MCF 10A (cell line): ENCODE measurements at regions of chr2 and their contacts with region 1.

Region 1: DNA sequence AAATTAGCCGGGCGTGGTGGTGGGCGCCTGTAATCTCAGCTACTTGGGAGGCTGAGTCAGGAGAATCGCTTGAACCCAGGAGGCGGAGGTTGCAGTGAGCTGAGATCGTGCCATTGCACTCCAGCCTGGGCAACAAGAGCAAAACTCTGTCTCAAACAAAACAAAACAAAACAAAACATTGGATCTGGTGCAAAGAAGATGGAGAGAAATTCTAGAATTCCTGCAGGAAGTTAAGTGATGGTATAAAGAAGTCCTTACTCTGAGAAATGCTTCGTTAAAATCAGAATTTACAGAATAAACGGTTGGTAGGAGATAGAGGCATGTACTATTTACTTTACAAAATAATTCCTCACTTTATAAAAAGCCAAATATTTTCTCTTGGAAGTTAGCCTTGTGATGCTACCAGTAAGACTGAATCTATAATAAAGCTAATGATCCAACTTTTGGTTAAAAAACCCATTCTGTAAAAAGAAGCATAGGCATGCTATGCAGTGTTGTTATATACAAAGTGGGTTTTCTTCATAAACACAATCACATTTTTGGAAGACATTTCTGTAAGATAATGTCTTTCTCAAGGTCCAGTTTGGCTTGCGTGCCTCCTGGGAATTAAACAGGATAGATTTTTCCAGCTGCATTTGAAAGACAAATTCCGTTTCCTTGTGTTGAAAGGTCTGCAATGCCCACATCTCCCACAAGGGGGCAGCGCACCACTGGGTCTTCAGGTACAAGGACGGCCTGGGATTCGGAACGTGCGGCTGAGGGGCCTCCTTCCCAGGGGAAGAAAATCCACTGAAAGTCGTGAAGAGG is 35.6 kb upstream of the PNO1 start:
- DNase-seq: peak; percentile 84
- H3K4me3 Mint-ChIP-seq: no peak overlapping the region
- H3K27ac Mint-ChIP-seq: no peak overlapping the region
- H3K4me1 Mint-ChIP-seq: peaks cover 5% of the 10 kb centered on the region
- H3K27me3 Mint-ChIP-seq: no peaks in the 10 kb centered on the region
- CTCF ChIP-seq: peak; percentile 97

Region 2: GRCh38 chr2:66541646-66542045 is 1580.4 kb before region 1 on chr2:
- CTCF ChIA-PET with region 1: no interaction called
- POLR2A ChIA-PET with region 1: no interaction called
- intact Hi-C with region 1: no loop called
- DNase-seq: no peak
- H3K4me3 Mint-ChIP-seq: no peak overlapping the region
- H3K27ac Mint-ChIP-seq: no peak overlapping the region
- H3K4me1 Mint-ChIP-seq: no peaks in the 10 kb centered on the region
- H3K27me3 Mint-ChIP-seq: no peaks in the 10 kb centered on the region
- CTCF ChIP-seq: no peak

Region 3: GRCh38 chr2:68018727-68019126 is 103.3 kb before region 1 on chr2:
- CTCF ChIA-PET with region 1: no interaction called
- POLR2A ChIA-PET with region 1: no interaction called
- intact Hi-C with region 1: no loop called
- DNase-seq: no peak
- H3K4me3 Mint-ChIP-seq: no peak overlapping the region
- H3K27ac Mint-ChIP-seq: no peak overlapping the region
- H3K4me1 Mint-ChIP-seq: peaks cover 5% of the 10 kb centered on the region
- H3K27me3 Mint-ChIP-seq: no peaks in the 10 kb centered on the region
- CTCF ChIP-seq: no peak

Region 4: GRCh38 chr2:68110102-68110501 is 12.0 kb before region 1 on chr2:
- CTCF ChIA-PET with region 1: interaction called, 14 read pairs
- POLR2A ChIA-PET with region 1: no interaction called
- intact Hi-C with region 1: no loop called
- DNase-seq: no peak
- H3K4me3 Mint-ChIP-seq: no peak overlapping the region
- H3K27ac Mint-ChIP-seq: no peak overlapping the region
- H3K4me1 Mint-ChIP-seq: no peaks in the 10 kb centered on the region
- H3K27me3 Mint-ChIP-seq: no peaks in the 10 kb centered on the region
- CTCF ChIP-seq: no peak

Region 5: GRCh38 chr2:68225119-68225632 is 103.1 kb after region 1 on chr2:
- CTCF ChIA-PET with region 1: interaction called, 4 read pairs
- POLR2A ChIA-PET with region 1: no interaction called
- intact Hi-C with region 1: loop called (anchors 1 kb)
- DNase-seq: peak; percentile 78
- H3K4me3 Mint-ChIP-seq: peak overlapping the region; percentile 56
- H3K27ac Mint-ChIP-seq: peak overlapping the region; percentile 74
- H3K4me1 Mint-ChIP-seq: peaks cover 28% of the 10 kb centered on the region
- H3K27me3 Mint-ChIP-seq: no peaks in the 10 kb centered on the region
- CTCF ChIP-seq: peak; percentile 34

Region 6: DNA sequence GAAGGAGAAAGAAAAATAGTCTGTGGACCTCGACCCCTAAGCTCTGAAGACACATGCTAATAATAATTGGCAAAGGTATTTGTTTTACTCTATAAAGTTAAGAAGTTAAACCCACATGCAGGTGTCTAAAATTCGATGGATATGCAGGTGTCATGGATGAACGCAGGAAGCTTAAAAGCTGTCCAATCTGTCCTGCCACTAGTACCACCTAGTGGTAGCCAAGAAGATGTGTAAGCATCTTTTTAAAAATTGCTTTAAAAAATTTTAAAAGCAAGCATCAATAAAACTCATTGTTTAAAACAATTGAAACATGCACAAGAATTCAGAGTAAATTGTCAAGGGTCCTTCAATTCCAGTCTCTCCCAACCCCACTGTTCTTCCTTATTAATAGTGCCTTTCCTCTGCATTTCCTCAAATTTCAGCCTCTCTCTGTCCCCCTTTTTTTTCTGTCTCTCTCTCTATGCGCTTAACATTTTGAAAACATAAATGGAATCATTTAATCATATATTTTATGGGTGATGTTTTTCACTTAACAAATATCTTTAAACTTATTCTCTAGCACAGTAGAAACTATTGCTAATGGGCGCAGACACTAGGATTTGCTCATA is 160.8 kb after region 1 on chr2:
- CTCF ChIA-PET with region 1: interaction called, 161 read pairs
- POLR2A ChIA-PET with region 1: interaction called, 5 read pairs
- intact Hi-C with region 1: loop called (anchors 1 kb)
- DNase-seq: peak; percentile 60
- H3K4me3 Mint-ChIP-seq: no peak overlapping the region
- H3K27ac Mint-ChIP-seq: no peak overlapping the region
- H3K4me1 Mint-ChIP-seq: peaks cover 29% of the 10 kb centered on the region
- H3K27me3 Mint-ChIP-seq: no peaks in the 10 kb centered on the region
- CTCF ChIP-seq: peak; percentile 76

Region 7: GRCh38 chr2:68345129-68345875 is 223.2 kb after region 1 on chr2:
- CTCF ChIA-PET with region 1: no interaction called
- POLR2A ChIA-PET with region 1: no interaction called
- intact Hi-C with region 1: no loop called
- DNase-seq: no peak
- H3K4me3 Mint-ChIP-seq: no peak overlapping the region
- H3K27ac Mint-ChIP-seq: no peak overlapping the region
- H3K4me1 Mint-ChIP-seq: no peaks in the 10 kb centered on the region
- H3K27me3 Mint-ChIP-seq: peaks cover 37% of the 10 kb centered on the region
- CTCF ChIP-seq: no peak

Region 8: GRCh38 chr2:68362069-68362468 is 240.0 kb after region 1 on chr2:
- CTCF ChIA-PET with region 1: no interaction called
- POLR2A ChIA-PET with region 1: no interaction called
- intact Hi-C with region 1: loop called (anchors 1 kb)
- DNase-seq: peak; percentile 68
- H3K4me3 Mint-ChIP-seq: no peak overlapping the region
- H3K27ac Mint-ChIP-seq: no peak overlapping the region
- H3K4me1 Mint-ChIP-seq: no peaks in the 10 kb centered on the region
- H3K27me3 Mint-ChIP-seq: no peaks in the 10 kb centered on the region
- CTCF ChIP-seq: peak; percentile 73